MCF 10A (cell line): ENCODE measurements at regions of chr14 and their contacts with region 1.

Region 1: DNA sequence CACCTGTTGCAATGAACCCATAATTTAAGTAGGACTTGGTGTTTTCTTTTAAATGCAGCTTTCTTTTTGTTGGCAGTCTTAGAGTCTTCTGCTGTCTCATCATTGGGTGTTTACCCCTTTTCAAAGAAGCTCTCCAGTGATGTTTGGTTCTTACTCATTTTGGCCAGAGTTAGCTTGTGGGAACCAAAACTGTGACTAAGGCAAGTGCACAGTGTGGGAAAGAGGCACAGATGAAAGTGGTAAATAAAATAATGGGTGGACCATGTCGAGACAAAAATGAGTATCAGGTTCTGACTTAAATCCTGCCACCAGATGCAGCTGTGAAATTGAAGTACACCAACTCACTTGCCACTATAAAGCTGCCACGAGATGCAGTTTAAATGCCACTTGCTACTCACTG is 615.4 kb upstream of the MIS18BP1 start:
- DNase-seq: peak; percentile 13
- H3K4me3 Mint-ChIP-seq: no peak overlapping the region
- H3K27ac Mint-ChIP-seq: no peak overlapping the region
- H3K4me1 Mint-ChIP-seq: no peaks in the 10 kb centered on the region
- H3K27me3 Mint-ChIP-seq: no peaks in the 10 kb centered on the region
- CTCF ChIP-seq: no peak

Region 2: DNA sequence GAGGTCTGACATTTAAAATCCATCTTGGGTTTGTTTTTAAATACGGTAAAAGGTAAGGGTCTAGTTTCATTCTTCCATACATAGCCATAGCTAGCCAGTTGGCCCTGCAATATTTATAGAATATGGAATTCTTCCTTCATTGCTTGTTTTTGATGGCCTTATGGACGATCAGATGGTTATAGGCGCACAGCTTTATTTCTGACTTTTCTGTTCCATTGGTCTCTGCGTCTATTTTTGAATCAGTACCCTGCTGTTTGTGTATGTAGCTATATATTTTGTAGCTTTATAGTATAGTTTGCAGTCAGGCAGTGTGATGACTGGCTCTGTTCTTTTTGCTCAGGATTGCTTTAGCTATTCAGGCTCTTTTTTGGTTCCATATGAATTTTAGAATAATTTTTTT is 248.5 kb before region 1 on chr14:
- CTCF ChIA-PET with region 1: no interaction called
- POLR2A ChIA-PET with region 1: no interaction called
- intact Hi-C with region 1: no loop called
- DNase-seq: no peak
- H3K4me3 Mint-ChIP-seq: no peak overlapping the region
- H3K27ac Mint-ChIP-seq: no peak overlapping the region
- H3K4me1 Mint-ChIP-seq: no peaks in the 10 kb centered on the region
- H3K27me3 Mint-ChIP-seq: no peaks in the 10 kb centered on the region
- CTCF ChIP-seq: no peak

Region 3: DNA sequence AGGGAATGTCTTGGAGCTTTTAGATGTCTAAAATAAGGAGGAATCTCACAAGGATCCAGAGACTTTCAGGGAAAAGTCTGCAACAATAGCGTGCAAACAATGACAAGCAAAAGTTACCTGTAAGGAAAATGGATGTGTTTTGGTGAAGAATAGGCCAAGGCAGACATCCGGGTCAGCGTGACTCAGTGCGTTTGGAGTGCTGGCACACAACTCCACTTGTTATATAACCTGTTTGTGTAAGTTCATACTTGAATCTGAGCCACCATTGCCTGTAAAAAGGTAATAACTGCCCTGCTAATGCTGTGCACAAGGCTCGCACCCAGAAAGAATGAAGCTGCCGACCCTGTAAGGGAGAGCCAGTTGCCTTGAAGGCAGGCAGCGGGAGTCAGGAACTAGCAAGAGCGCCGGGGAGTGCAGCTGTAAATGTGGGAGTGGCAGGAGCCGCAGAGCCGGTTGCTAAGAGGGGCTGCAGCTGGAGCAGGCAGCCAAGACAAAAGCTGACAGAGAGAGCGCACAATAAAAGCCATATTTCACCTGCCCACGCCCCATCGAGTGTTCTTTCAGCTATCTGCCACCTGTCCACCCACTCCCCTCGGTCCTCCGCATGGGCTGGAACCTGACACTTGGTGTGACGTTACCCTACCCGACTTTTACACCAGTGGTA is 23.2 kb after region 1 on chr14:
- CTCF ChIA-PET with region 1: no interaction called
- POLR2A ChIA-PET with region 1: no interaction called
- intact Hi-C with region 1: no loop called
- DNase-seq: peak; percentile 32
- H3K4me3 Mint-ChIP-seq: no peak overlapping the region
- H3K27ac Mint-ChIP-seq: no peak overlapping the region
- H3K4me1 Mint-ChIP-seq: peaks cover 9% of the 10 kb centered on the region
- H3K27me3 Mint-ChIP-seq: no peaks in the 10 kb centered on the region
- CTCF ChIP-seq: no peak

Region 4: DNA sequence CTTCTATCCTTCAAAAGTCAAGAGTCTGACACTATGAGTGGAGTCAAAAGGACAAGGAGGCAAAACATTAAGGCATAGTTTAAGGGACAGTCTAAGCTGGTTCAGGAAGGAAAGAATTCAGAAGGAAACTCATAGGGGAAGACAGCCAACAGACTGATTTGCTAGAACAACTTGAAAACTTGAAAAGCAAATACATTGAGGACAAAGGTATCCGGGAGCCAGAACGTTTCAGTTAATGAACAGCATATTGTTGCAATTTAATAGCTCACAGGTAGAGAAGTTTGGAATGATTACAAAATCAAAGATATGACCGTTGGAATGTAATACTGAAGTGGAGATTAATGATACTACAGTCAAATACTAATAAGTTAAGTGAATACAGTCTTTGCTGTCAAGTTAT is 1096.0 kb after region 1 on chr14:
- CTCF ChIA-PET with region 1: no interaction called
- POLR2A ChIA-PET with region 1: no interaction called
- intact Hi-C with region 1: loop called (anchors 10 kb)
- DNase-seq: no peak
- H3K4me3 Mint-ChIP-seq: no peak overlapping the region
- H3K27ac Mint-ChIP-seq: no peak overlapping the region
- H3K4me1 Mint-ChIP-seq: no peaks in the 10 kb centered on the region
- H3K27me3 Mint-ChIP-seq: no peaks in the 10 kb centered on the region
- CTCF ChIP-seq: no peak